Activated T-helper 2 cell treated with anti-CD3 and anti-CD28 coated beads, Interferon-gamma antibody, Interleukin-2, Interleukin-4, amounts not matched to agents 10 μg/mL and 5 μg/mL and 100 μg/mL, durations not matched to agents 14 hours and 24 hours and 36 hours (primary cell): ENCODE measurements at regions of chr9 and their contacts with region 1.

Region 1: GRCh38 chr9:70340572-70340971 is 73.9 kb downstream of the KLF9 start:
- DNase-seq: no peak
- H3K4me3 Mint-ChIP-seq: no peak overlapping the region
- H3K27ac Mint-ChIP-seq: no peak overlapping the region
- H3K4me1 Mint-ChIP-seq: peaks cover 10% of the 10 kb centered on the region
- H3K27me3 Mint-ChIP-seq: no peaks in the 10 kb centered on the region

Region 2: GRCh38 chr9:69898714-69899209 is 441.8 kb before region 1 on chr9:
- intact Hi-C with region 1: no loop called
- DNase-seq: no peak
- H3K4me3 Mint-ChIP-seq: no peak overlapping the region
- H3K27ac Mint-ChIP-seq: no peak overlapping the region
- H3K4me1 Mint-ChIP-seq: peaks cover 11% of the 10 kb centered on the region
- H3K27me3 Mint-ChIP-seq: peaks cover 2% of the 10 kb centered on the region

Region 3: GRCh38 chr9:70392189-70392588 is 51.6 kb after region 1 on chr9:
- intact Hi-C with region 1: loop called (anchors 5 kb)
- DNase-seq: no peak
- H3K4me3 Mint-ChIP-seq: no peak overlapping the region
- H3K27ac Mint-ChIP-seq: no peak overlapping the region
- H3K4me1 Mint-ChIP-seq: peaks cover 29% of the 10 kb centered on the region
- H3K27me3 Mint-ChIP-seq: no peaks in the 10 kb centered on the region

Region 4: GRCh38 chr9:70602321-70603019 is 261.9 kb after region 1 on chr9:
- intact Hi-C with region 1: loop called (anchors 1 kb)
- DNase-seq: peak; percentile 14
- H3K4me3 Mint-ChIP-seq: no peak overlapping the region
- H3K27ac Mint-ChIP-seq: no peak overlapping the region
- H3K4me1 Mint-ChIP-seq: peaks cover 1% of the 10 kb centered on the region
- H3K27me3 Mint-ChIP-seq: no peaks in the 10 kb centered on the region